Psoas muscle (tissue), 8 donors: ENCODE measurements at regions of chr14 and their contacts with region 1.

Region 1: GRCh38 chr14:75132382-75133086 is 5.7 kb upstream of the NEK9 start:
- DNase-seq: no peak
- ATAC-seq: peak; percentile 76 to 85 (median 84)
- H3K4me3 ChIP-seq: no peak overlapping the region
- H3K27ac ChIP-seq: peak overlapping the region; percentile 34
- H3K4me1 ChIP-seq: peaks cover 16% of the 10 kb centered on the region
- H3K27me3 ChIP-seq: no peaks in the 10 kb centered on the region
- CTCF ChIP-seq: peak; percentile 76

Region 2: GRCh38 chr14:75293920-75294642 is 161.5 kb after region 1 on chr14:
- intact Hi-C with region 1: loop called in 1 of 2 experiments (anchors 1 kb)
- DNase-seq: peak; percentile 96 to 98
- ATAC-seq: peak; percentile 92 to 97 (median 95)
- H3K4me3 ChIP-seq: peak overlapping the region; percentile 85
- H3K27ac ChIP-seq: peak overlapping the region; percentile 95
- H3K4me1 ChIP-seq: peaks cover 10% of the 10 kb centered on the region
- H3K27me3 ChIP-seq: no peaks in the 10 kb centered on the region
- CTCF ChIP-seq: no peak

Region 3: GRCh38 chr14:75307700-75308379 is 175.3 kb after region 1 on chr14:
- intact Hi-C with region 1: loop called (anchors 2 kb)
- DNase-seq: peak; percentile 85 to 92
- ATAC-seq: peak; percentile 78 to 85 (median 81)
- H3K4me3 ChIP-seq: no peak overlapping the region
- H3K27ac ChIP-seq: no peak overlapping the region
- H3K4me1 ChIP-seq: peaks cover 13% of the 10 kb centered on the region
- H3K27me3 ChIP-seq: no peaks in the 10 kb centered on the region
- CTCF ChIP-seq: peak; percentile 94

Region 4: DNA sequence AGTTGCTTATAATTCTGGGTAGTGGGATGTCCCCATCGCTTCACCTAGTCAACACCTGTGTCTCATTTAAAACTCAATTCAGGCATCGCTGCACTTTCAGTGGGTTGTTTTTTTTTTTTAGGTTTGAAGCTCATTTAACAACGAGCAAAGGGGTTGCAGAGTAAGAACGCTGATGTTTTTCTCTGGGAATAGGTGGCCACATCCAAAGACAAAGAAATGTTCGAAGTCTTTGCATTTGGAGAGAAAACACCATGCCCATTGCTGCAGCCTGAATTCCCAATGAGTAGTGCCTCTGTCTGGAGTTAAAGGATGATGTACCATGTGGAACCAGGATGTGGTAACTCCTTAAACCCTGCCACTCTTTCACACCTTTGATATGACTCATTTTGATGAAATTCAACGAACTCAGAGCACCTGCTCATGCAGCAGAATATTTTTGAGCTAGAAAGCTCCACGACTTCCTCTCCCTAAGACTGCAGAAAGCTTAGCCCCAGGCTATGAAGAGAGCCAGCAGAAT is 354.7 kb after region 1 on chr14:
- intact Hi-C with region 1: loop called (anchors 5 kb)
- DNase-seq: no peak
- ATAC-seq: no peak
- H3K4me3 ChIP-seq: no peak overlapping the region
- H3K27ac ChIP-seq: no peak overlapping the region
- H3K4me1 ChIP-seq: no peaks in the 10 kb centered on the region
- H3K27me3 ChIP-seq: no peaks in the 10 kb centered on the region
- CTCF ChIP-seq: no peak